Heart left ventricle (tissue), 16 donors: ENCODE measurements at regions of chr9 and their contacts with region 1.

Region 1: DNA sequence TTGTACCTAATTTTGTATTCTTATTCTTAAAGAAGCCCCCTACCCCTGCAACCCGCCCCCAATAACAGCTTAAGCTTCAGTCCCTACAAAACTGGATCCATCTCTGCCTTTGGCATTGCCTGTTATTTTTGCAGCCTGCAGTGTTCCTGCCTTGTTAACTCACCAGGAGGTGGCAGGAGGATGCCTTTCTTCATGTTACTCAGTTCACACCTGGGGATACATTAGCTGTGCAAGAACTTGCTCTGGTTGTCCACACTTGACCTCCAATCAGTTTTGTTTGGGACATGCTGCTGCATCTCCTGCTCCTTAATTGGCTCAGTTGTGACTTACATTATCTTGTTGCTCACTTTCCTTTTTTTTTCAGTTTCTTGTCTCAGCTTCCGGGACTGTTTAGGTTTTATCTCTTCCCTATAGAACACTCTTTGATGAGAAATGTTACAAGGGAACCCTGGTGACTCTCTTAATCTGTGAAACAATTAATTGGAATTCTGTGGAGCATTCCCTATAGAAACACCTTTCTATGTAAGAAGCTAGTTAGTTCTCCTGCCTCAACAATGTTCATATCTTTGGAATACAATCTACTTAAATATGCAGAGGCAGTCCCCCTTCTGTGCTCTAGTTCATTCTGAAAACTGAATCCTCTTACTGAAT is 467.7 kb upstream of the ACO1 start:
- DNase-seq: no peak
- ATAC-seq: no peak
- H3K4me3 ChIP-seq: no peak overlapping the region
- H3K27ac ChIP-seq: no peak overlapping the region
- H3K4me1 ChIP-seq: no peaks in the 10 kb centered on the region
- H3K27me3 ChIP-seq: no peaks in the 10 kb centered on the region
- CTCF ChIP-seq: no peak
- POLR2A ChIP-seq: no peak

Region 2: GRCh38 chr9:31759703-31760102 is 157.0 kb before region 1 on chr9:
- intact Hi-C with region 1: no loop called
- DNase-seq: no peak
- ATAC-seq: no peak
- H3K4me3 ChIP-seq: no peak overlapping the region
- H3K27ac ChIP-seq: no peak overlapping the region
- H3K4me1 ChIP-seq: no peaks in the 10 kb centered on the region
- H3K27me3 ChIP-seq: no peaks in the 10 kb centered on the region
- CTCF ChIP-seq: no peak
- POLR2A ChIP-seq: no peak

Region 3: GRCh38 chr9:31868830-31869229 is 47.9 kb before region 1 on chr9:
- intact Hi-C with region 1: loop called in 1 of 10 experiments (anchors 10 kb)
- DNase-seq: no peak
- ATAC-seq: no peak
- H3K4me3 ChIP-seq: no peak overlapping the region
- H3K27ac ChIP-seq: no peak overlapping the region
- H3K4me1 ChIP-seq: no peaks in the 10 kb centered on the region
- H3K27me3 ChIP-seq: no peaks in the 10 kb centered on the region
- CTCF ChIP-seq: no peak
- POLR2A ChIP-seq: no peak

Region 4: GRCh38 chr9:31983895-31984294 is 67.2 kb after region 1 on chr9:
- intact Hi-C with region 1: no loop called
- DNase-seq: no peak
- ATAC-seq: no peak
- H3K4me3 ChIP-seq: no peak overlapping the region
- H3K27ac ChIP-seq: no peak overlapping the region
- H3K4me1 ChIP-seq: no peaks in the 10 kb centered on the region
- H3K27me3 ChIP-seq: no peaks in the 10 kb centered on the region
- CTCF ChIP-seq: no peak
- POLR2A ChIP-seq: no peak

Region 5: DNA sequence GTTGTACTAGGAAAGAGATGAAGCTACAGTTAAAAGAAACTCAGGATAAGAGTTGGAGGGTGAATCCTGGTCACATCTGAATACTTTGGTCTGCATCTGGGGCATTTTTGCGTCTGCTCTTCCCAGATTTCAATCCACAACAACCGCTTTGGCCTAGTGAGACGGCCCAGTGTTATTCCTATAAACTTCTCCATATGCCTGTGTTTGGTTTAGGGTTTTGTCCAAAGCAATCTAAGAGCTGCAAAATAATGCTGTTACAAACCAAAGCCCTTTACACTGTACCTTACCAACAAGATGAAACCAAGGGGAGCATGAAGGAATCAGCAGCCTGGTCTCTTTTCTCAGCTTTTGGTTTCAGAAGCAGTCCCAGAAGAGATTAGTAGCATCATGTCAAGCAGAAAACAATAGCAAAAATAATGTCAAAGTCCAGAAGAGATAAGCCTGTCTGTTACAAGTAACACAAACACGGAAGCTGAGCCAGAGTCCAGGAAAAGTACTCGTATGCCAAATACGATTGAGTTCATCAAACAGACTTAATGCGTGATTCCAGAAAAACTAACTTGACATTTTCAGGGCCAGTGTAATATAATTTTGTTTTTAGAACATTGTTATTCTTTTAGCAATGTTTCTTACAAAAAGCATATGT is 87.8 kb after region 1 on chr9:
- intact Hi-C with region 1: no loop called
- DNase-seq: no peak
- ATAC-seq: no peak
- H3K4me3 ChIP-seq: no peak overlapping the region
- H3K27ac ChIP-seq: no peak overlapping the region
- H3K4me1 ChIP-seq: no peaks in the 10 kb centered on the region
- H3K27me3 ChIP-seq: no peaks in the 10 kb centered on the region
- CTCF ChIP-seq: no peak
- POLR2A ChIP-seq: no peak

Region 6: GRCh38 chr9:32161209-32161608 is 244.5 kb after region 1 on chr9:
- intact Hi-C with region 1: no loop called
- DNase-seq: no peak
- ATAC-seq: no peak
- H3K4me3 ChIP-seq: no peak overlapping the region
- H3K27ac ChIP-seq: no peak overlapping the region
- H3K4me1 ChIP-seq: no peaks in the 10 kb centered on the region
- H3K27me3 ChIP-seq: no peaks in the 10 kb centered on the region
- CTCF ChIP-seq: no peak
- POLR2A ChIP-seq: no peak